ENCODE measurements at regions of chr13 and their contacts with region 1.

Region 1: GRCh38 chr13:32632343-32632909 is 46.2 kb downstream of the PDS5B start:
- DNase-seq: no peak
- H3K4me3 ChIP-seq: no peak overlapping the region
- H3K27ac ChIP-seq: no peak overlapping the region
- H3K4me1 ChIP-seq: no peaks in the 10 kb centered on the region
- H3K27me3 ChIP-seq: no peaks in the 10 kb centered on the region
- CTCF ChIP-seq: no peak
- POLR2A ChIP-seq: no peak

Region 2: GRCh38 chr13:32515246-32515645 is 117.2 kb before region 1 on chr13:
- intact Hi-C with region 1: no loop called
- DNase-seq: no peak
- H3K4me3 ChIP-seq: no peak overlapping the region
- H3K27ac ChIP-seq: no peak overlapping the region
- H3K4me1 ChIP-seq: no peaks in the 10 kb centered on the region
- H3K27me3 ChIP-seq: no peaks in the 10 kb centered on the region
- CTCF ChIP-seq: no peak
- POLR2A ChIP-seq: no peak

Region 3: GRCh38 chr13:32548837-32549236 is 83.6 kb before region 1 on chr13:
- intact Hi-C with region 1: no loop called
- DNase-seq: no peak
- H3K4me3 ChIP-seq: no peak overlapping the region
- H3K27ac ChIP-seq: no peak overlapping the region
- H3K4me1 ChIP-seq: no peaks in the 10 kb centered on the region
- H3K27me3 ChIP-seq: no peaks in the 10 kb centered on the region
- CTCF ChIP-seq: no peak
- POLR2A ChIP-seq: no peak

Region 4: GRCh38 chr13:32595306-32595705 is 37.1 kb before region 1 on chr13:
- intact Hi-C with region 1: loop called (anchors 5 kb)
- DNase-seq: no peak
- H3K4me3 ChIP-seq: no peak overlapping the region
- H3K27ac ChIP-seq: no peak overlapping the region
- H3K4me1 ChIP-seq: no peaks in the 10 kb centered on the region
- H3K27me3 ChIP-seq: no peaks in the 10 kb centered on the region
- CTCF ChIP-seq: no peak
- POLR2A ChIP-seq: no peak

Measured in testis (tissue), 5 donors.